ENCODE measurements at regions of chr14 and their contacts with region 1.

Region 1: GRCh38 chr14:69242311-69243224 is 17.4 kb upstream of the GALNT16 start:
- DNase-seq: no peak
- ATAC-seq: peak; percentile 74

Region 2: DNA sequence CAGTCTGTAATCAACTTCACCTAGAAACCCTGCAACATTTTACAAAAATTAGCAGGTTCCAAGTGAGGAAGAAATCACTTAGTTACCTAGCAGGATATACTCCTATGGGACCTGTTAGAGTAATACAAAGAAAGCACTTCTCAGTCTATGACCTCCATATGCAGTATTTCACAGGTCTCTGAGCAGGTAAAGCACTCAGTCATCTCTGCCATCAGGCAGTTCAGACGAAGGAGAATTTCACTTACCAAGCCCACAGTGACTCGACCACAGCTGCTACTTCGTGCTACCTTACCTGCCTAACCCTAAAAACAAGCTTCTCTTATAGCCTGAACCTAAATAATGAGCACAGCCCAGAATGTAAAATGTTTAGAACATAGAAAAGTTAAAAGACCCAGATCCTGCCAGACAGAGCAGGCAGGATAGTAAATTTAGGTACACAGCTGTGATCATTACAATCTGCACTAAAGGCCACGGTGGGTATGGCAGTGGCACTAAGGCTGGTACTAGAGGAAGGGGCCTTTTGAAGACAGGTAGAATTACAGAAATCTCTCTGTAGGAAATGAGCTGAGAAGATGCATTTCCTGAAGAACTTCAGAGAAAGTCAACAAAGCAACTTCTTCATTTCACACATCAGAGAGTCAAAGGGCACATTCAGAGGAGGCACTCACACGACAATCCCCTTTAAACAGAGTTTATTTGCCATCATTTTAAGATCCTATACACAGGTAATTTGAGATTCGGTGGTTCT is 125.4 kb before region 1 on chr14:
- intact Hi-C with region 1: no loop called
- DNase-seq: no peak
- ATAC-seq: no peak

Region 3: DNA sequence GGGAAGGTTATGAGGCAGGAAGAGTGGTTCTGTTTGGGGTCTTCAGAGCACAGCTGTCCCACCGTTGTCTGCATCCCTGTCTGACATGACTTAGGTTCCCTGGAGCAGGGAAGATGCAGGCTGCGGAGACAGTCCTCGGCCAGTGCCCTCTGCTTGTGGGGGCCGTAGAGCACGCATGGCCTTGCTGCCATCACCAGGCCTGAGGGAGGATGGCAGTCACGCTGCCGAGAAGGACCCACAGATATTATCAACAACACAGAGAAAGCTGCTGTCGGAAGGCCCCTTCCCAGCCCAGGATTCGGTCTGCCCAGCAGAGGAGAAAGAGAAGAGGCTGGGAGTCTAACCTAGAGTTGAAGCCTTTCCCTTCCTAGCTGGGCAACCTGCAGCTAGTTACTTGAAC is 120.5 kb after region 1 on chr14:
- intact Hi-C with region 1: loop called (anchors 5 kb)
- DNase-seq: peak; percentile 64
- ATAC-seq: peak; percentile 79

Region 4: DNA sequence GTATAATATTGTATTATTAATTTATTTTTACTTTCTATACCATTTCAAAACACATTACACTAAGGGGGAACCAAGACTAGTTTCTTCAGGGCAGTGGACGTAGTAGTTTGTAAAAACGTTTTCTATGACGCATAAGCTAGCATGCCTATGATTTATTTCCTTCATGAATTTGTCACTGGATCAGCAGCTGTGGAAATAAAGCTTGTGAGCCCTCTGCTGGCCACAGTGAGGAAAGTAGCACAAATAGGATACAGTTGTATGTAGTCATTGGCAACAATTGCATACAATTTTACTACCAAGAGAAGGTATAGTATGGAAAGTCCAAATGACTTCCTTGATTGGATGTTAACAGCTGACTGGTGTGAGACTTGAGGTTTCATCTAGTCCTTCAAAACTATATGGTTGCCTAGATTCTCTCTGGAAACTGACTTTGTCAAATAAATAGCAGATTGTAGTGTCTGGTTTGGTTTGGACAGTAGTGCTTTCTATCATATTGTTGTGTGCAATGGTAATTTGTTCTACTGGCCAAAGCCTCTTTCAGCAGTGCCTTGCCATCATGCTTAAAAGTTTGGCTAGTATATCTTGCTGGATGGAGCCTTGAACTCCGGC is 217.6 kb after region 1 on chr14:
- intact Hi-C with region 1: loop called (anchors 2 kb)
- DNase-seq: no peak
- ATAC-seq: peak; percentile 88

Region 5: DNA sequence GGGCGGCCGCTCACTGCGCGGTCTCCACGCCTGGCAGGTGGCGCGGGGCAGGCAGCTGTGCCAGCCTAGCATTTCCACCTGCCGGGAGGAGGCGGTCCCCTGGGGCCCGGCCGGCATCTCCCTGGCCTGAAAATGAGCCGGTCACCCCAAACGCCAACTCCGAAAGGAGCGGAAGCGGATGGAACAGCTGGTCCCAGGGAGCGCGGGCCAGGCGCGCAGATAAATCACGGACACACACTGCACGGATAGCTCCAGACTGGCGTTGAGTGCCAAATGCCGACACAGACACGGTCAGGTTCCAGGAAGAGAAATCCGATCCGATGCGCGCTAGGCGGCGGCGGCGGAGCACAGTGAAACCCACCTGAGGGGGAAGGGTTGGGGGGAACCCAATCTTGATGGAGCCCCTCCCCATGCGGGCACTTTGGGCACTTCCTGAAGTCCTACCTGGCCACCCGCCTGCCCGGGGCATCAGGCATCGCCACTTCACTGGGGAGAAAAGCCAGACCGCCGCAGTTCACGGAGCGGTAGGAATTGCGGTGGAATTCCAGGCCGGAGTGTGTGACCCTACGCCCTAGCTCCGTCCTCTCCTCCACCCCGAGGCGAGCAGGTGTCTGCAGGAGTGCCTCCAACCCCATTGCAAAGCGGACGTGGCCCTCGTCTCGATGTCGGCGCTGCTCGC is 241.3 kb after region 1 on chr14:
- intact Hi-C with region 1: no loop called
- DNase-seq: peak; percentile 56
- ATAC-seq: peak; percentile 80